CD4-positive, alpha-beta T cell (primary cell): ENCODE measurements at regions of chr10 and their contacts with region 1.

Region 1: GRCh38 chr10:110414563-110415309 is 83.0 kb upstream of the DUSP5 start:
- DNase-seq: peak; percentile 60 to 96 (median 82)
- ATAC-seq: peak; percentile 95
- H3K4me3 ChIP-seq: no peak overlapping the region
- H3K4me3 Mint-ChIP-seq: peak overlapping the region; percentile 22
- H3K27ac ChIP-seq: peak overlapping the region in 1 of 2 donors; percentile 26
- H3K27ac Mint-ChIP-seq: peak overlapping the region; percentile 79
- H3K4me1 ChIP-seq: peaks cover 47% of the 10 kb centered on the region
- H3K4me1 Mint-ChIP-seq: peaks cover 20% of the 10 kb centered on the region
- H3K27me3 ChIP-seq: no peaks in the 10 kb centered on the region
- H3K27me3 Mint-ChIP-seq: no peaks in the 10 kb centered on the region
- CTCF ChIP-seq: no peak

Region 2: DNA sequence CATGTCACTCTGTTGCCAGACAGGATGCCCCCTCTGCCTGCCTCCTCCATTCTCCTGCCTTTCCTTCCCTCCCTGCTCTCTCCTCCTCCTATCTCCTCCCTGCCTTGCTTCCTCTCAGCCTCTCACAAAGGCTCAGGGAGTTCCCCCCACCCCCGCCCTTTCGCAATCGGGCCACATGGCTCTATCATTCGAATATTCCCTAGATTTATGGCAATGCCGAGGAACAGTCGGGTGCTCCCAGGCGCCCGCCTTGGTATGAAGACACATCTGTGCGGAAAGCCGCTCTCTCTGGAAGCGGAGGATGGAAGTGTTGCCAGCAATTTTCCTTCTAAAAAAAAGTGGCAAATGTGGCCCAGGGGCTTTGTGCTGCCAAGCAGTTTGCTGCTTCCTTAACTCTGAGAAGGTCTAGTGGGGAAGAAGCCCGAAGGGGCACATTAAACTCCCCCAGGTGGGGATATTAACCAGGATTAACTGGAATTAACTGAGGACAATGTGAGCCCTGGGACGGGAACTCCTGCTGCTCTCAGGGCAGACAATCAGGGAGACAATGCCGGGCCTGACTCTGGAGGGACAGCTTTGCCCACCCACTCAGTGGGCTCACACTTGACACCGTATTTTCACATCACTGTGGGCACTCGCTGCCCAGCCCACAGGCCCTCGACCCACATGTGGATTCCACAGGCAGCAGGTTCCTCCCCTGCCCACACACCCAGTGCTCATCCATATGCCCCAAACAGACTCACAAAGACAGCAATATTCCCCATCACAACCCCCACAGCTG is 21.7 kb before region 1 on chr10:
- CTCF ChIA-PET with region 1: no interaction called
- POLR2A ChIA-PET with region 1: no interaction called
- intact Hi-C with region 1: no loop called
- DNase-seq: no peak
- ATAC-seq: no peak
- H3K4me3 ChIP-seq: no peak overlapping the region
- H3K4me3 Mint-ChIP-seq: no peak overlapping the region
- H3K27ac ChIP-seq: no peak overlapping the region
- H3K27ac Mint-ChIP-seq: no peak overlapping the region
- H3K4me1 ChIP-seq: peaks cover 15% of the 10 kb centered on the region
- H3K4me1 Mint-ChIP-seq: peaks cover 7% of the 10 kb centered on the region
- H3K27me3 ChIP-seq: no peaks in the 10 kb centered on the region
- H3K27me3 Mint-ChIP-seq: no peaks in the 10 kb centered on the region
- CTCF ChIP-seq: no peak

Region 3: GRCh38 chr10:110492069-110492822 is 77.5 kb after region 1 on chr10:
- CTCF ChIA-PET with region 1: interaction called, 3 read pairs
- POLR2A ChIA-PET with region 1: interaction called, 8 read pairs
- intact Hi-C with region 1: loop called (anchors 2 to 5 kb)
- DNase-seq: peak in 2 of 14 experiments; percentile 18 to 38
- ATAC-seq: no peak
- H3K4me3 ChIP-seq: no peak overlapping the region
- H3K4me3 Mint-ChIP-seq: no peak overlapping the region
- H3K27ac ChIP-seq: no peak overlapping the region
- H3K27ac Mint-ChIP-seq: no peak overlapping the region
- H3K4me1 ChIP-seq: peaks cover 18% of the 10 kb centered on the region
- H3K4me1 Mint-ChIP-seq: peaks cover 24% of the 10 kb centered on the region
- H3K27me3 ChIP-seq: no peaks in the 10 kb centered on the region
- H3K27me3 Mint-ChIP-seq: no peaks in the 10 kb centered on the region
- CTCF ChIP-seq: no peak